Caco-2 (cell line): ENCODE measurements at regions of chr1 and their contacts with region 1.

Region 1: GRCh38 chr1:228004331-228004855 is 2.4 kb upstream of the WNT3A start:
- DNase-seq: peak in 1 of 2 experiments; percentile 26
- H3K4me3 ChIP-seq: no peak overlapping the region
- H3K4me3 Mint-ChIP-seq: no peak overlapping the region
- H3K27ac Mint-ChIP-seq: no peak overlapping the region
- H3K4me1 ChIP-seq: 0 out of 2 replicates have a peak, but pooled peaks cover 4% of the 10 kb centered on the region
- H3K4me1 Mint-ChIP-seq: no peaks in the 10 kb centered on the region
- H3K27me3 ChIP-seq: no peaks in the 10 kb centered on the region; the same call in none of the 2 replicates
- H3K27me3 Mint-ChIP-seq: peaks cover 18% of the 10 kb centered on the region
- CTCF ChIP-seq: peak; percentile 35 to 56

Region 2: GRCh38 chr1:227532019-227532619 is 472.3 kb before region 1 on chr1:
- CTCF ChIA-PET with region 1: no interaction called
- POLR2A ChIA-PET with region 1: no interaction called
- intact Hi-C with region 1: no loop called
- DNase-seq: no peak
- H3K4me3 ChIP-seq: no peak overlapping the region
- H3K4me3 Mint-ChIP-seq: no peak overlapping the region
- H3K27ac Mint-ChIP-seq: no peak overlapping the region
- H3K4me1 ChIP-seq: no peaks in the 10 kb centered on the region
- H3K4me1 Mint-ChIP-seq: no peaks in the 10 kb centered on the region
- H3K27me3 ChIP-seq: no peaks in the 10 kb centered on the region
- H3K27me3 Mint-ChIP-seq: no peaks in the 10 kb centered on the region
- CTCF ChIP-seq: no peak

Region 3: DNA sequence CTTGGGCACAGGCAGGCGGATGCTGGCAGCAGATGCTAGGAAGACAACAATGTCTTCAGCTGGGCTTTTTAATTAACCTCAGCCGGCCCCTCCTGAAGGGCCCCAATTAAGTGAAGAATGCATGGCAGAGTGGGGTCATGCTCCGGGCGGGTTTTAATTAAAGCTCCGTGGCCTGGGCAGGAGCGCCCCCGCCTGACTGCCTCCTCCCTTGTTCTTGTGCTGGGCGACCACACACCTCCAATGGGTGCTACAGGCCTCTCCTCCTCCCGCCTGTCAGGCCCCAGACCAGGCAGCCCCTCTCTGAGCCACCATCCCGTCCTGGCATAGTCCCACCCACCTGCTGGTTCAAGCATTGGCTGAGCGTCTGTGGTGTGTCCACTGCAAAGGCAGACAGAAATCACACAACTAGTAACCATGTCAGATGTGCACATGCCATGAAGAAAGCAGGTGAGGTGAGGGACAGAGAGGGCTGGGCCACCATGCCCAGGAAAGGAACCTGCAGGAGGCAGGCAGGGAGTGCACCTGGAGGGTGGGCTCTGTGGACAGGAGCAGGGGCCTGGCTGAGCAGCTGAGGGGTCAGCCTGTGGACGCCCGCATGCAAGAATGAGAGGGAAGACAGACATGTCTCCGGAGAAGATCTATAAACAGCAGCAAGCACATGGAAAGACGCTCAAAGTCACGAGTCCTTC is 69.6 kb after region 1 on chr1:
- CTCF ChIA-PET with region 1: interaction called, 5 read pairs
- POLR2A ChIA-PET with region 1: no interaction called
- intact Hi-C with region 1: loop called (anchors 1 kb)
- DNase-seq: peak in 1 of 2 experiments; percentile 36
- H3K4me3 ChIP-seq: no peak overlapping the region
- H3K4me3 Mint-ChIP-seq: no peak overlapping the region
- H3K27ac Mint-ChIP-seq: no peak overlapping the region
- H3K4me1 ChIP-seq: no peaks in the 10 kb centered on the region
- H3K4me1 Mint-ChIP-seq: no peaks in the 10 kb centered on the region
- H3K27me3 ChIP-seq: no peaks in the 10 kb centered on the region
- H3K27me3 Mint-ChIP-seq: no peaks in the 10 kb centered on the region
- CTCF ChIP-seq: no peak